Natural killer cell (primary cell): ENCODE measurements at regions of chr2 and their contacts with region 1.

Region 1: GRCh38 chr2:68721482-68722101 is 13.0 kb upstream of the ARHGAP25 start:
- DNase-seq: peak in 1 of 2 donors; percentile 78
- ATAC-seq: peak in 2 of 3 donors; percentile 17 to 34
- H3K4me3 ChIP-seq: no peak overlapping the region
- H3K4me3 Mint-ChIP-seq: peak overlapping the region; percentile 11
- H3K27ac ChIP-seq: peak overlapping the region; percentile 12
- H3K27ac Mint-ChIP-seq: peak overlapping the region in 1 of 2 donors; percentile 47
- H3K4me1 ChIP-seq: peaks cover 43% of the 10 kb centered on the region
- H3K4me1 Mint-ChIP-seq: peaks cover 40 to 49% of the 10 kb centered on the region in 2 donors
- H3K27me3 ChIP-seq: peaks cover 14% of the 10 kb centered on the region
- H3K27me3 Mint-ChIP-seq: peaks cover 57 to 67% of the 10 kb centered on the region in 2 donors
- CTCF ChIP-seq: no peak

Region 2: GRCh38 chr2:68594674-68595492 is 126.7 kb before region 1 on chr2:
- intact Hi-C with region 1: no loop called
- DNase-seq: peak; percentile 36 to 79
- ATAC-seq: peak; percentile 75 to 83 (median 81)
- H3K4me3 ChIP-seq: no peak overlapping the region
- H3K4me3 Mint-ChIP-seq: peak overlapping the region; percentile 52
- H3K27ac ChIP-seq: no peak overlapping the region
- H3K27ac Mint-ChIP-seq: peak overlapping the region; percentile 35 to 43
- H3K4me1 ChIP-seq: no peaks in the 10 kb centered on the region
- H3K4me1 Mint-ChIP-seq: peaks cover 6 to 13% of the 10 kb centered on the region in 2 donors
- H3K27me3 ChIP-seq: no peaks in the 10 kb centered on the region
- H3K27me3 Mint-ChIP-seq: peaks cover 0 to 9% of the 10 kb centered on the region in 2 donors
- CTCF ChIP-seq: peak; percentile 91

Region 3: DNA sequence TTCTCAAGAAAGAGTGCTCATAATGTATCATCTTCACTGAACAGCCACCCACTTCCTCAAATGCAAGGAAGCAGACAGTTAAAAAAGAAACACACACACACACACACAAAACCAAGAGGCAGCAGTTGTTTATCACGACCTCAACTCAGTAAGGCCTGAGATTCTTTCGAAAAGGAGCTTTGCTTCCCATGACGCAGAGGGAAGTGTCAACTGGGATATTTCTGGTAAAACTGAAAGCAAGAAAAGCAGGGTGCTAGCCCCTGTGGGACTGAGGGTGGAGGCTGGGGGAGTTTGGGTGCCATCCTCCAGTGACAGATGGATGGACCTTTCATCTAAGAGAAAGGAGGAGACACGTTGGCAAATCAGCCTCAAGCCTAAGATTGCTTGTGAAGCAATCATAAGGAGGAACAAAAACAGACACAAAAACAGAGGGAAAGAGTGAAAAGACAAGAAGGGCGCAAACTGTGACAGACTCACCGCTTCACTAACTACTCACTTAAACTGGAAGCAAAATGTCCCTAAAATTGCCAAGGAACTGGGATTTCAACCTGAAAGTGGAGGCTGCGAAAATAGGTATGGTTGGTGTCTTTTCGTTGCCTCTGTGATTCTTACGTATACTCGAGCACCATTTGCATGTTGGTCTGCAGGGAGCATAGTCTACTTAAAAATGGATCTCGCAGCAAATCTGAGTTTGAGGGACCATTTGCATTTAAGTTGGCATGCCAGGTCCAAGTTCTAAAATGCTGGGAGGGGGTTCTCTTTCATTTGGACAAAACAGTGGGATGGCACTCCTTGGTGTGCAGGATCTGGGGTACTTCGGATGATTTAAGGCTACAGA is 13.3 kb after region 1 on chr2 and contains the start of gene ARHGAP25:
- intact Hi-C with region 1: loop called (anchors 2 kb)
- DNase-seq: peak in 1 of 2 donors; percentile 77
- ATAC-seq: peak; percentile 61 to 67 (median 64)
- H3K4me3 ChIP-seq: peak within 1 kb of the TSS; percentile 55
- H3K4me3 Mint-ChIP-seq: no peak within 1 kb of the TSS
- H3K27ac ChIP-seq: peak within 1 kb of the TSS; percentile 81
- H3K27ac Mint-ChIP-seq: no peak within 1 kb of the TSS
- H3K4me1 ChIP-seq: peaks cover 39% of the 10 kb centered on the region
- H3K4me1 Mint-ChIP-seq: peaks cover 16% of the 10 kb centered on the region in 2 donors
- H3K27me3 ChIP-seq: no peaks in the 10 kb centered on the region
- H3K27me3 Mint-ChIP-seq: peaks cover 13 to 14% of the 10 kb centered on the region in 2 donors
- CTCF ChIP-seq: no peak
- total RNA-seq, gene ARHGAP25: 122 to 180 (median 155) TPM